ENCODE measurements at regions of chr10 and their contacts with region 1.

Region 1: GRCh38 chr10:17617031-17617911 is at the start of gene HACD1:
- DNase-seq: peak; percentile 77
- ATAC-seq: peak; percentile 88 to 92
- total RNA-seq, gene HACD1: 104 to 151 TPM

Region 2: DNA sequence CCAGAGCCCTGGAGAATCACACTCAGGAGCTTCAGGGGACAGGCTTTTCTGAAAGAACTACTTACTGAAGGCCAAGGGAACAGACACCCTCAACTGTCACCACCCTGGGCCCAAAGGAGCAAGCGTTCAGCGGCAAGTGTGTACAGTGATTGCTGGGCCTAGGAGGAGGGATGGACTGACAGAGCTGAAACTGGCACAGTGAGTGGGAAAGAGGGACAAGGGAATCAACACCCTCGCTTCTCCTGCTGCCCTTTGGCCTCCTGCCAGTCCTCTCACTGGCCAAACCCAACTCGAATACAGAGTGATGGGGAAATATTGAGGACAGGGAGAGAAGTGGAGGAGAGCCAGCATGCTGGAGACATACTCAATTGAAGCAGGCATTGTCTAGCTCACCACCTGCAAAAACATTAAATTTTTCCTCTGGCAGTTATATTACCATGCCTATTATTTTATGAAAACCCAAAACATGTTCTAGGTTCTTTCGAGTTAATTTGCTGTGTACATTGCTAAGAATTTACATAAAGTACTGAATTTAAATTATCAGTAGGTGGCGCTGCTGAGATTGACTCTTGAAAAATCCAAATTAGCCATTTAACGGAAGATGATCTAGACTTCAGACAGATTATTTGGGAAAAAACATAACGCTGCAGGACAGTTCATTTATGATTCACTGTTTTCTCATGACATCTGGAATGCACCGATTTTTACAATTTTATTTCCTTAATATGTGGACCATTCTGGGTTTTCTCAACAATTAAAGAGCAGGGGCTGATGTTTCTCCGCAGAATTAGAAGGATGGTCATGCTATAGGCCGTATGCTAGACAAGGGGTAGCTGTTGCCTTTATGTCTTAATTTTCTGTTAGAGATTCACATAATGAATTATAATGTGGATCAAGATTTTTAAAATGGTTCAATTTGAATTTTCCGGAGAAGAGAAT is 120.0 kb after region 1 on chr10:
- intact Hi-C with region 1: loop called in 1 of 2 experiments (anchors 5 kb)
- DNase-seq: peak; percentile 61
- ATAC-seq: peak; percentile 67 to 75